Heart right ventricle (tissue), 16 donors: ENCODE measurements at regions of chr10 and their contacts with region 1.

Region 1: GRCh38 chr10:92573798-92574547 is at the start of gene IDE:
- DNase-seq: peak; percentile 88 to 93
- ATAC-seq: peak; percentile 96 to 99 (median 98)
- H3K4me3 ChIP-seq: peak within 1 kb of the TSS; percentile 53 to 99 (median 92)
- H3K27ac ChIP-seq: peak within 1 kb of the TSS; percentile 81 to 98 (median 96)
- H3K4me1 ChIP-seq: peaks cover 0 to 34% (median 30%) of the 10 kb centered on the region in 9 donors
- H3K27me3 ChIP-seq: no peaks in the 10 kb centered on the region
- CTCF ChIP-seq: peak; percentile 77 to 95 (median 85)
- total RNA-seq, gene IDE: 41.8 to 58.5 (median 47.5) TPM

Region 2: DNA sequence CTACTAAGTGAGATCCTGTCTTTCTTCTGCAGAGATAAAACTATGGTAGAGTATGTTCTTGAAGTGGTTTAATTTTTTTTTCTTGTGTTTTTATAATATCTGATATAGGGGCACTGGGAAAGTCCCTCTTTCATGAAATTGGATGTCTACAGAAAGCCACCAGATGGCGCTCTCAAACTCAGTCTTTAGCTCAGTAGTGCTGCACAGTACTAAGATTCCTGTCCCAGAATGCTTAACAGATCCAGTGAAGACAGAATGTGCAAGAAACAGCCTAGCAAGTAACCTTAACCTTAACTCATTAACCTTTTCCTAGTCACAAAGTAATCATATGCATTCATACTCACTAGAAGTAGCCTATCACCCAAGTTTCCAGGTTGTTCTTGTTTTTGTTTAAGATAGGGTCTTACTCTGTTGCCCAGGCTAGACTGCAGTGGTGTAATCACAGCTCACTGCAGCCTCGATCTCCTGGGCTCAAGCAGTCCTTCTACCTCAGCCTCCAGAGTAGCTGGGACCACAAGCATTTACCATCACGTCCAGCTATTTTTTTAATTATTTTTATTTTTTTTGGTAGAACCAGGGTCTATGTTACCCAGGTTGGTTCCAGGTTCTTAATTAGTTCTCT is 56.8 kb before region 1 on chr10:
- intact Hi-C with region 1: loop called (anchors 1 to 5 kb)
- DNase-seq: peak in 1 of 2 donors; percentile 68
- ATAC-seq: peak; percentile 65 to 86 (median 82)
- H3K4me3 ChIP-seq: peak overlapping the region in 1 of 10 donors; percentile 5
- H3K27ac ChIP-seq: no peak overlapping the region
- H3K4me1 ChIP-seq: peaks cover 0 to 6% (median 0%) of the 10 kb centered on the region in 9 donors
- H3K27me3 ChIP-seq: no peaks in the 10 kb centered on the region
- CTCF ChIP-seq: peak; percentile 69 to 90 (median 82)

Region 3: GRCh38 chr10:92592761-92593618 is 19.0 kb after region 1 on chr10 and contains the start of gene KIF11:
- intact Hi-C with region 1: loop called in 1 of 10 experiments (anchors 2 kb)
- DNase-seq: peak; percentile 97
- ATAC-seq: peak; percentile 95 to 97 (median 96)
- H3K4me3 ChIP-seq: peak within 1 kb of the TSS; percentile 54 to 99 (median 71)
- H3K27ac ChIP-seq: peak within 1 kb of the TSS; percentile 76 to 98 (median 94)
- H3K4me1 ChIP-seq: peaks cover 0 to 49% (median 16%) of the 10 kb centered on the region in 9 donors
- H3K27me3 ChIP-seq: no peaks in the 10 kb centered on the region
- CTCF ChIP-seq: peak in 1 of 9 donors; percentile 9
- total RNA-seq, gene KIF11: 0.30 to 4.4 (median 0.84) TPM